Left cardiac atrium (tissue), 4 donors: ENCODE measurements at regions of chr20 and their contacts with region 1.

Region 1: GRCh38 chr20:1392823-1393506 is at the start of gene FKBP1A:
- DNase-seq: peak; percentile 94
- ATAC-seq: peak; percentile 97 to 99
- total RNA-seq, gene FKBP1A: 154 to 214 TPM

Region 2: GRCh38 chr20:1313236-1313964 is 79.6 kb before region 1 on chr20:
- intact Hi-C with region 1: loop called in 1 of 2 experiments (anchors 5 kb)
- DNase-seq: peak; percentile 85
- ATAC-seq: peak; percentile 83 to 91

Region 3: GRCh38 chr20:1324598-1325172 is 68.3 kb before region 1 on chr20:
- intact Hi-C with region 1: loop called (anchors 1 to 5 kb)
- DNase-seq: peak; percentile 28
- ATAC-seq: no peak

Region 4: GRCh38 chr20:1336699-1337367 is 56.1 kb before region 1 on chr20:
- intact Hi-C with region 1: loop called in 1 of 2 experiments (anchors 2 kb)
- DNase-seq: peak; percentile 89
- ATAC-seq: peak; percentile 91 to 93